ENCODE measurements at regions of chr3 and their contacts with region 1.

Region 1: GRCh38 chr3:79383402-79384012 is 384.3 kb downstream of the ROBO1 start:
- DNase-seq: no peak
- ATAC-seq: no peak
- H3K4me3 Mint-ChIP-seq: 0 out of 2 replicates have a peak overlapping the region, but pooled peaks have one; percentile 1
- H3K27ac Mint-ChIP-seq: peak overlapping the region; percentile 78
- H3K4me1 Mint-ChIP-seq: peaks cover 37% of the 10 kb centered on the region
- H3K27me3 Mint-ChIP-seq: no peaks in the 10 kb centered on the region
- CTCF ChIP-seq: no peak

Region 2: DNA sequence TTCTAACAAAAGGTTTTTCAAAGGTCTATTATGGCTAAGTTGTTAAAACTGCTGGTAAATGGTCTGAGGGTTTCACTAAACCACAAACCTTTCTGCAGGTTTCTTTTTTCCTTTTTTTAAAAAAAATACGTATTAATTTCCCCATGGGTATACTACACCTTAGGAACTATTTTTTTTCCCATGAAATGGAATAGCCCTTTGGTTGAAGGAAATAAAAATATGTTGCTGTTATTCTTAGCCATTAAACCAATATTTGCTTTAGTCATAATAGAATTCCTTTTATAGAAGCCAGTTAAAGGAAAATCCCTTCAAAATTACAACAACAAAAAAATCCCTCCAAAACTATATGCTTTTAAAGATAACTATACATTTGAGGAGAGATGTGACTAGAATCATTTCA is 1040.3 kb before region 1 on chr3:
- CTCF ChIA-PET with region 1: no interaction called
- POLR2A ChIA-PET with region 1: interaction called, 11 read pairs
- DNase-seq: no peak
- ATAC-seq: no peak
- H3K4me3 Mint-ChIP-seq: no peak overlapping the region
- H3K27ac Mint-ChIP-seq: no peak overlapping the region
- H3K4me1 Mint-ChIP-seq: peaks cover 74% of the 10 kb centered on the region
- H3K27me3 Mint-ChIP-seq: no peaks in the 10 kb centered on the region
- CTCF ChIP-seq: no peak

Region 3: GRCh38 chr3:79258479-79258878 is 125.0 kb before region 1 on chr3:
- CTCF ChIA-PET with region 1: no interaction called
- POLR2A ChIA-PET with region 1: no interaction called
- DNase-seq: no peak
- ATAC-seq: no peak
- H3K4me3 Mint-ChIP-seq: no peak overlapping the region
- H3K27ac Mint-ChIP-seq: no peak overlapping the region
- H3K4me1 Mint-ChIP-seq: no peaks in the 10 kb centered on the region
- H3K27me3 Mint-ChIP-seq: no peaks in the 10 kb centered on the region
- CTCF ChIP-seq: no peak

Measured in WTC11 (cell line).